ENCODE measurements at regions of chr16 and their contacts with region 1.

Region 1: GRCh38 chr16:56576585-56577293 is 11.9 kb downstream of the MT4 start:
- DNase-seq: peak; percentile 85
- CTCF ChIP-seq: peak; percentile 85

Region 2: GRCh38 chr16:56591377-56592060 is 14.8 kb after region 1 on chr16:
- CTCF ChIA-PET with region 1: interaction called, 12 read pairs
- POLR2A ChIA-PET with region 1: no interaction called
- DNase-seq: no peak
- CTCF ChIP-seq: no peak

Region 3: GRCh38 chr16:56600398-56600999 is 23.8 kb after region 1 on chr16:
- CTCF ChIA-PET with region 1: interaction called, 28 read pairs
- POLR2A ChIA-PET with region 1: no interaction called
- DNase-seq: peak; percentile 57
- CTCF ChIP-seq: peak; percentile 63

Region 4: DNA sequence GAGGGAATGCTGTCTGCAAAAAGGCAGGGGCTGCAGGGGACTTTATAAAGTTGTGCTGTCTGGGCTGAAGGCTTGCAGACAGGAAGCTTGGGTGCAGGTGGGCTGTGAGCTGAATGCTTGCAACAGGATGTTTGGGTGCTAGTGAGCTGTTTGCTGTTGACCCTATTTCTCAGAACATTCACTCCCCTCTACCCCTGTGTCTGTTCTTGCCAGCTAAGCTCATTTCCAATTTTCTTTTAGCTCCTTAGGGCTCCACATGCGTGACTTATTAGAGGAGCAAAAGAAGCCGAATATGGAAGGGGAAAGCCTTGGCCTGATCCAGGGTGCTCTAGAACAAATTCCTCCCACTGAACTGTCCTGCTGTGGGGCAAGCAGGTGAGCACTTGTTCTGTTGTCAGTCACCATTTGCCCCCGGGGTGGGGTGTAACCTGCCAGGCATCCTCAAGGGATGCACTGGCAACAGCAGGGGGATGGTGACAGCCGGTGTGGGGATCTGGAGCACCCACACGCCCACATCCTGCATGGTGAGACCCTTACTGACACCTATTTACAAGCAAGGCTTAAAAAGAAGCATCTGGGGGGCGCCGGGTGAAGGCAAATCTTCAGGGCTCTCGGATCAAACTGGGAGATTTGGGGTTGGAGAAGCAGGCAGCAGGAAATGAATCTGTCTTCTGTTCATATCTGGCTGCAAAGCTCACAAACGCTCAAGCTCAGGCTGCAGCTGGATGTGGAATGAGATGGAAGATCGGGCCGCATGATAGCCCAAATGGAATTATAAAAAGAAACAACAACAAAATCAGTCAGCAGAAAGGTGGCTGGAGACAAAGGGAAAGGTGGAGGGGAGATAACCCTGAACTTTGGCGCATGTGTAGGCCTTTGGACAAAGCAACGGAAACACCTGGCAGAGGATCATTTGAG is 132.0 kb after region 1 on chr16:
- CTCF ChIA-PET with region 1: interaction called, 73 read pairs
- POLR2A ChIA-PET with region 1: no interaction called
- DNase-seq: no peak
- CTCF ChIP-seq: no peak

Measured in GM10248 (cell line).